ENCODE measurements at regions of chr7 and their contacts with region 1.

Region 1: DNA sequence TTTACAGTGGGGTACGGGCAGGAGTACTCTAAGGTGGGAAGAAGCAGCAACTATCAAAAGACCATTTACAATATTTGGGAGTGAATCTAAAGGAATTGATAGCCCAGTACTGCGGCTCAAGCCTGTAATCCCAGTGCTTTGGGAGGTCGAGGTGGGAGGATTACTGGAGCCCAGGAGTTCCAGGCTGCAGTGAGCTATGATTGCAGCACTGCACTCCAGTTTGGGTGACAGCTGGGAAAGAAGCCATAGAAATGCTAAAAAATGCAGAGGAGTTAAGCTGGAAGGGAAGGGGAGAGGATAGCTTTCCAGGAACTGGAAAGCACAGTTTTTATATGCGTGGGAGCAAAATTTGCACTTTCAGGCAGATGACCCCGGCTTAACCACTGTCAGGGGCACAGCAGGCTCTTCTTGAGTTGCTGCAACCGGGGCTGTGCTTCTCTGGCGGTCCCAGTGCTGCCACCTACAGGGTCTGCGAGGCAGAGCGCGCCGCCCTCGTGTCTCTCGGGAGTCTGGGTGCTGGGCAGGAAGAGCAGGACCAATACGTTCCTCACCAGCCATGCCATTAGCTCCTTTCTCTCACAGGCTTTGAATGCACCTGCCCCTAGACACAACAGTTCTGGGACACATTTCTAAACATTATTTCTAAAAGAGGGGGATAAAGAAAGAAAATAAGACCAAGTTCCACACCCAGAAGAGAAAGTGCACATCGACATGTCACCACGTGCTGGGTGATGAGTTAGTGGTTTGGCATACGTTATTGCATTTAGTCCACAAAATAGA is 10.1 kb upstream of the BMPER start:
- DNase-seq: peak; percentile 78 to 84
- H3K4me3 ChIP-seq: no peak overlapping the region
- H3K4me3 Mint-ChIP-seq: no peak overlapping the region
- H3K27ac Mint-ChIP-seq: no peak overlapping the region
- H3K4me1 ChIP-seq: no peaks in the 10 kb centered on the region
- H3K4me1 Mint-ChIP-seq: peaks cover 6% of the 10 kb centered on the region
- H3K27me3 ChIP-seq: no peaks in the 10 kb centered on the region
- H3K27me3 Mint-ChIP-seq: peaks cover 8% of the 10 kb centered on the region
- CTCF ChIP-seq: peak; percentile 86 to 88

Region 2: GRCh38 chr7:33243319-33243881 is 651.8 kb before region 1 on chr7:
- CTCF ChIA-PET with region 1: no interaction called
- POLR2A ChIA-PET with region 1: no interaction called
- intact Hi-C with region 1: loop called (anchors 10 kb)
- DNase-seq: peak in 1 of 2 experiments; percentile 15
- H3K4me3 ChIP-seq: no peak overlapping the region
- H3K4me3 Mint-ChIP-seq: no peak overlapping the region
- H3K27ac Mint-ChIP-seq: no peak overlapping the region
- H3K4me1 ChIP-seq: no peaks in the 10 kb centered on the region
- H3K4me1 Mint-ChIP-seq: no peaks in the 10 kb centered on the region
- H3K27me3 ChIP-seq: no peaks in the 10 kb centered on the region
- H3K27me3 Mint-ChIP-seq: peaks cover 3% of the 10 kb centered on the region
- CTCF ChIP-seq: peak; percentile 56 to 68

Region 3: GRCh38 chr7:33757562-33758165 is 137.6 kb before region 1 on chr7:
- CTCF ChIA-PET with region 1: no interaction called
- POLR2A ChIA-PET with region 1: no interaction called
- intact Hi-C with region 1: loop called (anchors 1 kb)
- DNase-seq: peak in 1 of 2 experiments; percentile 39
- H3K4me3 ChIP-seq: no peak overlapping the region
- H3K4me3 Mint-ChIP-seq: no peak overlapping the region
- H3K27ac Mint-ChIP-seq: no peak overlapping the region
- H3K4me1 ChIP-seq: 0 out of 2 replicates have a peak, but pooled peaks cover 8% of the 10 kb centered on the region
- H3K4me1 Mint-ChIP-seq: peaks cover 8% of the 10 kb centered on the region
- H3K27me3 ChIP-seq: no peaks in the 10 kb centered on the region
- H3K27me3 Mint-ChIP-seq: peaks cover 3% of the 10 kb centered on the region
- CTCF ChIP-seq: peak; percentile 44 to 51